ENCODE measurements at regions of chr11 and their contacts with region 1.

Region 1: DNA sequence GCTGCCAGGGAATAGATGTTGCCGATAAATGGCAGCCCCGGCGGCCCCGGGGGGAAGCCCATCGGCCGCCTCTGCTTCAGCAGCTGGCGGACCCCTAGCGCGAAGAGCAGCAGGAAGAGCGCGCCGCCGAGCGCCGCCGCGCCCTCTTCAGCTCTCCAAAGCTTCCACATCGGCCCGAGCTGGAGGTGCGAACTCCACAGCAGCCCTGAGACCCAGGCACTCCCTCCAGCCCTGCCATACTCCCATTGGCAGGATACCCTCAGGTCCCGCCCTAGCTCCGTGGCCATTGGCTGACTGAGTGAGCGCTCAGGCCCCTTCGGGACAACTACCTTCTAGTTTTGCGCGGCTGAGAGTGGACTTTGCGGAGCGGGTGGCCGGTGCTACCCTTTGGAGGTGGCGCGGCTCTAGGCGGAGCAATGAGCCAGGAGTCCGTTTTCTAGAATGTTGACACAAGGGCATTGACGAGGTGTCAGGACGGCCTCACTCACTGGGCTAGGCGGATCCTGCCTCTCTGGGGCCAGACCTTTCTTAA is at the start of gene CYP2R1:
- DNase-seq: peak; percentile 77 to 94 (median 88)
- ATAC-seq: peak; percentile 82 to 86
- H3K4me3 Mint-ChIP-seq: peak within 1 kb of the TSS; percentile 88 to 99 (median 96)
- H3K27ac Mint-ChIP-seq: peak within 1 kb of the TSS; percentile 86 to 99 (median 96)
- H3K4me1 Mint-ChIP-seq: peaks cover 25 to 46% (median 44%) of the 10 kb centered on the region in 4 donors
- H3K27me3 Mint-ChIP-seq: no peaks in the 10 kb centered on the region
- polyA plus RNA-seq, gene CYP2R1: 11.9 to 19.4 (median 16.3) TPM

Region 2: GRCh38 chr11:14499554-14500180 is 392.4 kb before region 1 on chr11 and contains the start of gene COPB1:
- POLR2A ChIA-PET with region 1: interaction called, 16 read pairs
- DNase-seq: peak; percentile 82 to 96 (median 93)
- ATAC-seq: peak; percentile 93 to 94
- H3K4me3 Mint-ChIP-seq: peak within 1 kb of the TSS; percentile 90 to 100 (median 96)
- H3K27ac Mint-ChIP-seq: peak within 1 kb of the TSS; percentile 90 to 100 (median 98)
- H3K4me1 Mint-ChIP-seq: peaks cover 23 to 50% (median 44%) of the 10 kb centered on the region in 4 donors
- H3K27me3 Mint-ChIP-seq: no peaks in the 10 kb centered on the region
- polyA plus RNA-seq, gene COPB1: 46.6 to 67.7 (median 64.9) TPM

Region 3: GRCh38 chr11:14519917-14520746 is 372.0 kb before region 1 on chr11 and contains the start of gene PSMA1:
- POLR2A ChIA-PET with region 1: interaction called, 10 read pairs
- DNase-seq: peak; percentile 83 to 92 (median 88)
- ATAC-seq: peak; percentile 90 to 96
- H3K4me3 Mint-ChIP-seq: peak within 1 kb of the TSS; percentile 90 to 99 (median 96)
- H3K27ac Mint-ChIP-seq: peak within 1 kb of the TSS; percentile 92 to 98 (median 98)
- H3K4me1 Mint-ChIP-seq: peaks cover 11 to 38% (median 27%) of the 10 kb centered on the region in 4 donors
- H3K27me3 Mint-ChIP-seq: no peaks in the 10 kb centered on the region
- polyA plus RNA-seq, gene PSMA1: 154 to 159 (median 156) TPM

Region 4: DNA sequence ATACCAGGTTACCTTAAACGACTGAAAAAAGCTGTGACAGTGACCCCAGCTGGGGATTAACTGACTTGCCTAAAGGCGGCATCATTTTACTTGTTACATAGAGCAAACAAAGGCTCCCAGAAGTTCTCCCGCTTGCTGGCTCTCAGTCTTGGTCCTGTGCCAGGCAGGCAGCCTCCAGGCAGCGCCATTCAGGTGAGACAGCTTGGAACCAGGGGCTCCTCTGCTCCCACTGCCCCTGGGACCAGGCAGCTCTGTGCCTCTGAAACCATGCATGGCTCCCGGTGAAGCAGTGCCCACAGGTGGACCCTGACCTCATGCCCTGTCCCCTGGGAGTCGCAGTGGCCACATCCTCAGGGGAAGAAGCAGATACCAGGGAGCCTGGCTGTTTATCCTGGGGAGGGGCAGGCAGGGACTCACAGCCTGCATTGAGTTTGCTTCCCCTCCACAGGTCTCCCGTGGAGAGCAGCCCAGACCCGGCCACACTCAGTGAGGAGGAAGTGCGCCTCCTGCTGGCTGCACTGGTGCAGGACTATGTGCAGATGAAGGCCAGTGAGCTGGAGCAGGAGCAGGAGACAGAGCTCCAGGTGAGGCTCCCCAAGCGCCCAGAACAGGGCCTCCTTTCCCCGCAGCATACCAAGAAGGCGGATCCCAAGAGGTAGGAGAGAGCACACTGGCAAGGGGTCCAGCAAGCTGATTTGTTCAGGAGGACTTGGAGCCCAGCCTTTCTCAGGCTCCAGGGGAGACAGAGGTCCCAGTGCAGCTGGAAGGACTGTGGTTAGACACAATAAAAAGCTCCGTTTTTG is 15.5 kb after region 1 on chr11:
- POLR2A ChIA-PET with region 1: interaction called, 31 read pairs
- DNase-seq: peak; percentile 64 to 88 (median 80)
- ATAC-seq: peak; percentile 52 to 60
- H3K4me3 Mint-ChIP-seq: peak overlapping the region in 2 of 10 donors; percentile 15 to 25
- H3K27ac Mint-ChIP-seq: peak overlapping the region; percentile 35 to 96 (median 74)
- H3K4me1 Mint-ChIP-seq: peaks cover 24 to 44% (median 43%) of the 10 kb centered on the region in 4 donors
- H3K27me3 Mint-ChIP-seq: no peaks in the 10 kb centered on the region

Measured in naive thymus-derived CD8-positive, alpha-beta T cell (primary cell).